ENCODE measurements at regions of chr3 and their contacts with region 1.

Region 1: GRCh38 chr3:51371943-51372557 is 13.0 kb upstream of the MANF start:
- DNase-seq: no peak
- H3K4me3 ChIP-seq: no peak overlapping the region
- H3K27ac ChIP-seq: no peak overlapping the region
- H3K4me1 ChIP-seq: no peaks in the 10 kb centered on the region
- H3K27me3 ChIP-seq: peaks cover 6% of the 10 kb centered on the region
- CTCF ChIP-seq: peak; percentile 57 to 72 (median 58)

Region 2: DNA sequence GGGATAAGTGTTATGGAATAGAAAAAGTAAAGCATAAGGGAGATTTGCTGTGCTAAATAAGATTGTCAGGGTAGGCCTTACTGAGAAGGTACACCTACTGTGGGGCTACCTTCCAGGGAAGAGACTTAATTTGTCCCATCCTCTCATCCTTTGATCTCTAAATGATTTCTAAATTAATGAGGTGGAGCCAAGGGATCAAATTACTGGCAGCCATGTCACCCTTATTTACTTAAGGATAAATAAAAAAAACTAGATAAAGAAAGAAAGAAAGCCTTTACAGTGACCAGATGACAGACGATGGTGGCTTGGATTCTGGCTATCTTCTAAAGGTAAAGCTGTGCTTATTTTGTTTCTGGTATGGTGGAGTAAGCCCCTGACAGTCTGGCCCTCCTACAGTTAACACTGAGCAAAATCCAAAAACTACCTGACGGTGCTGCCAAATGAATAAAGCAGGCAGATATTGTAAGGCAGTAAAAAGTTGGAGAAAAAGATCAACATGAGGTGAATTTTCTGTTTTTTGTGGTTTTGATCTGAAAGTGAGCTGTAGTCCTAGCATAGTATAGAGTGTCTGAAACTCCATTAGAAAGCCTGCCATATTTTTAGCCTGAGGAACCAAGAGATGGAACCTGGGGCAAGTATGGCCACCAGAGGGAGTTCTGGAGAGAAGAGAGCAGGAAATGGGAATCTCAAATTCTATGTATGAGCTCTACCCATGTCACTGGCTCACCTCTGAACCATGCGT is 272.1 kb before region 1 on chr3:
- dilution Hi-C with region 1: loop called (anchors 25 kb)
- DNase-seq: no peak
- H3K4me3 ChIP-seq: no peak overlapping the region
- H3K27ac ChIP-seq: no peak overlapping the region
- H3K4me1 ChIP-seq: no peaks in the 10 kb centered on the region
- H3K27me3 ChIP-seq: no peaks in the 10 kb centered on the region
- CTCF ChIP-seq: peak; percentile 60 to 78 (median 74)

Measured in keratinocyte (primary cell).